ENCODE measurements at regions of chr3 and their contacts with region 1.

Region 1: GRCh38 chr3:45092132-45093031 is 53.8 kb downstream of the CDCP1 start:
- DNase-seq: no peak
- H3K4me3 ChIP-seq: no peak overlapping the region
- H3K27ac ChIP-seq: no peak overlapping the region
- H3K4me1 ChIP-seq: no peaks in the 10 kb centered on the region
- H3K27me3 ChIP-seq: no peaks in the 10 kb centered on the region
- CTCF ChIP-seq: no peak

Region 2: GRCh38 chr3:45055411-45056143 is 36.8 kb before region 1 on chr3:
- CTCF ChIA-PET with region 1: interaction called, 14 read pairs
- POLR2A ChIA-PET with region 1: no interaction called
- intact Hi-C with region 1: no loop called
- DNase-seq: peak; percentile 58
- H3K4me3 ChIP-seq: no peak overlapping the region
- H3K27ac ChIP-seq: no peak overlapping the region
- H3K4me1 ChIP-seq: peaks cover 10% of the 10 kb centered on the region
- H3K27me3 ChIP-seq: no peaks in the 10 kb centered on the region
- CTCF ChIP-seq: peak; percentile 45

Region 3: DNA sequence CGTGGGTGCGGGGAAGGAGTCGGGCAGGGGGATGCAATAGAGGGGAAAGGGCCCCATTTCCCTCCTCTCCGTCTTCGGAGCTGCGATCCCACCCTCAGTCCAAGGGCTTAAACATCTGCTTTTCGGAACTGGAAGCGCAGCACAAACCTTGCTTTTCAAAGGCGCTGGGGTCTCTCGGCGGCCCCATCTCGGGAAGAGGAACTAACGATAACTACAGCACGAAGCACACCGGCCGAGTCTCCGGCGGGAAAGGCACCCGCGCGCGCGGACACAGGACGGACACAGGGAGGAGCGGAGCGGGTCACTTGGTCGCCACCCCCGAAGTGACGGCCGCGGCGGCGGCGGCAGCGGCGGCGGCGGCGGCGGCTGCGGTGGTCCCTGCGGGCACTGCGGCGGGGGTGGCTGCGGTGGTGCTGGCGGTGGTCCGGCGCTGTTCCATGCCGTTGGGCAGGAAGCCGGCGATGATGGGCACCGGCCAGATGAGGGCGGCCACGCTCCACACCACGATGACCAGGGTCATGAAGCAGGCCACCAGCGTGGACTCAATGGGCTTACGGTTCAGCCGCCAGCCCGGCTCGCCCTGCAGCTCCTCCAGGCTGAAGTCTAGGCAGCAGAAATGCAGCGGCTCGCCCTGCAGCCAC is 132.6 kb after region 1 on chr3:
- CTCF ChIA-PET with region 1: no interaction called
- POLR2A ChIA-PET with region 1: no interaction called
- intact Hi-C with region 1: no loop called
- DNase-seq: peak; percentile 26
- H3K4me3 ChIP-seq: peak overlapping the region; percentile 54
- H3K27ac ChIP-seq: no peak overlapping the region
- H3K4me1 ChIP-seq: peaks cover 4% of the 10 kb centered on the region
- H3K27me3 ChIP-seq: no peaks in the 10 kb centered on the region
- CTCF ChIP-seq: peak; percentile 25; the same call in 1 of the 2 replicates

Measured in A673 (cell line).